ENCODE measurements at regions of chr14 and their contacts with region 1.

Region 1: GRCh38 chr14:50697659-50698290 is 29.7 kb upstream of the SAV1 start:
- DNase-seq: no peak
- H3K4me3 ChIP-seq: no peak overlapping the region
- H3K27ac ChIP-seq: no peak overlapping the region
- H3K4me1 ChIP-seq: no peaks in the 10 kb centered on the region
- H3K27me3 ChIP-seq: no peaks in the 10 kb centered on the region
- CTCF ChIP-seq: no peak
- EP300 ChIP-seq: no peak
- POLR2A ChIP-seq: no peak

Region 2: DNA sequence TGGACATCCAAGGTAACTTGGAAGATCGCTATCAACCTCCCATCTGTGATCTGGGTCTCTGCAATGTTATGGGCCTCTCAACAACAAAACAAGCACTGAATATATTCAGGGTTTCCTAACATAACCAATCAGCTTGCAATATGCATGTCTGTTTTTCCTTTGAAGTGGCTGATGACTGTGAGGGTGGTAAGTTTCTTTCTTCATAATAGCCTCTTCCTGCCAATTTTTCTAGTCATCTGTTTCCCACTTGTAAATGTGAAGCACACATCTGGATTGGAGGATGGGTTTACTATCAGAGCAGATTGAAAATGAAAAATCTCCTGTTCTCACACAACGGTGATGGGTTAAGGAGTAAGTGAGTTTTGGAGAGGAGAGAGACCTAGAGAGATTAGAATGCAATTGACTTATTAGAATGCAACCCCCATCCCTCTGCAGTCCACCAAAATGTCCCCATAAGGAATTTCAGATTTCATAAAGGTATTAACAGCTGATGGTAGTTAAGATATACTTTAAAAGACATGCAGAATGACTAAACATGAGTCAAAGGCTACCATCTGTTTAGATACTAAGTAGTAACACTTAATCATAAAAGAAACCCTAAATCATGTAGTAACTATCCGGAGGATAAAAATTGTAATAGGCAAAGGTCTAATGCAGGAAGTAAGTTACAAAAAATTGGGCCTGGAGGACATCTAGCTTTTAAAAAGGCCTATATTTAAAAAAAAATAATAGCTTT is 28.8 kb after region 1 on chr14:
- intact Hi-C with region 1: loop called in 1 of 4 experiments (anchors 2 kb)
- DNase-seq: no peak
- H3K4me3 ChIP-seq: no peak overlapping the region
- H3K27ac ChIP-seq: no peak overlapping the region
- H3K4me1 ChIP-seq: no peaks in the 10 kb centered on the region
- H3K27me3 ChIP-seq: no peaks in the 10 kb centered on the region
- CTCF ChIP-seq: no peak
- EP300 ChIP-seq: no peak
- POLR2A ChIP-seq: no peak